Calu3 (cell line): ENCODE measurements at regions of chr10 and their contacts with region 1.

Region 1: DNA sequence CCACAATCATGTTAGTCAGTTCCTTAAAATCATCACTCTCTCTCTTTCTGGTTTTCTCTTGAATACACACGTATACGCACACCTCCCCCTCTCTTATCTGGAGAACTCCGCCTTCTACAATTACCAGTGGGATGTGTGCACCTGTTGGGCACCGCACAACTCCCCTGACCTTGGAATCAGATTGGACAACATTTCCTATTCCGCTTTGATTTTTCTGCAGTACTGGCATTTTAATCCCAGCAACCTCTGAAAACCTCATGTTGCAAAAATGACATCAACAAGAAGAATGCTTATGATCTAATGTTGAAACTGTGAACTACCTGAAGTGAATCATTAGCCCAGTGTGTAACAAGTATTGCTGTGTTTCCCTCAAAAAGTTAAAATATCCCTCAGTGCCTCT is 109.6 kb downstream of the KIAA1217 start:
- DNase-seq: peak; percentile 11
- H3K4me3 Mint-ChIP-seq: peak overlapping the region; percentile 25
- H3K27ac Mint-ChIP-seq: peak overlapping the region; percentile 68
- H3K4me1 Mint-ChIP-seq: peaks cover 25% of the 10 kb centered on the region
- H3K27me3 Mint-ChIP-seq: no peaks in the 10 kb centered on the region
- CTCF ChIP-seq: no peak

Region 2: GRCh38 chr10:24238519-24239252 is 79.8 kb before region 1 on chr10:
- CTCF ChIA-PET with region 1: interaction called, 4 read pairs
- intact Hi-C with region 1: loop called (anchors 5 kb)
- DNase-seq: peak; percentile 74
- H3K4me3 Mint-ChIP-seq: peak overlapping the region; percentile 74
- H3K27ac Mint-ChIP-seq: peak overlapping the region; percentile 92
- H3K4me1 Mint-ChIP-seq: peaks cover 24% of the 10 kb centered on the region
- H3K27me3 Mint-ChIP-seq: no peaks in the 10 kb centered on the region
- CTCF ChIP-seq: no peak

Region 3: DNA sequence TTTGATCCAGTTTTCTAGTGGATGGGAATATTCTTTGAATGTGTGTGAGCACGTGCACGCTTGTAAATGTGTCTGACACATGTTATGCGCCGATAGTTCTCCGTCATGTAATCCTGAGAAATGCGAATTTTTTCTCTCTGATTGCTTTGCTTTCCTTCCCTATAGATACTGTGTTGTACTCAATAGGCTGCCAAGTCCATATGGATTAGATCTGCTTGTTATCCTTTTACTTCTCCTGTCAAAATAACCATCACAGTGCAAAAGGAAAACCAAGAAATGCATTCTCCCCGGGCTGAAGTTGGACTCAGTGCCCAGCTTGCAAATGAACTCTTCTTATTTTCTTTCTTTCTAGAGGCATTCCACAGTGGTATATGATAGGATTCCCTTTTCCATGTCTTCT is 22.4 kb after region 1 on chr10:
- CTCF ChIA-PET with region 1: no interaction called
- intact Hi-C with region 1: no loop called
- DNase-seq: no peak
- H3K4me3 Mint-ChIP-seq: no peak overlapping the region
- H3K27ac Mint-ChIP-seq: no peak overlapping the region
- H3K4me1 Mint-ChIP-seq: peaks cover 20% of the 10 kb centered on the region
- H3K27me3 Mint-ChIP-seq: no peaks in the 10 kb centered on the region
- CTCF ChIP-seq: no peak

Region 4: DNA sequence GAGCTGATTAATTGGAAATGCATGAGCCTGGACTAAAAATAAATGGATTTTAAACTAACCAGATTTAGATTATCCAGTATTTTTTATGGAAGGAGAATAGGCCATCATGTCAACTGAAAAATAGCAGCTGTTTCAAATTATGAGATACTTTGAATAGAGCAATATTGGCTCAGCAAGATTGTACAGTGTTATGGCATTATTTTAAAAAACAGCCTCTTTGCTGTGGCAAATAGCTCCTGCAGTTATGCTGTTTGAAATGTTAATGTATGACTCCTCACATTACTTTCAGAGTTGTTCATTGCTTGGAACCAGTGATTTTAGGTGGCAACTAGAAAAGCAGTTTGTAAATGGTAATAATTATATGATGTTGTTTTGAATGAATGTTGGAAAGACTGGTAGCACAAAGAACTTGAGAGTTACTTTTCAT is 134.9 kb after region 1 on chr10:
- CTCF ChIA-PET with region 1: interaction called, 10 read pairs
- intact Hi-C with region 1: no loop called
- DNase-seq: no peak
- H3K4me3 Mint-ChIP-seq: no peak overlapping the region
- H3K27ac Mint-ChIP-seq: no peak overlapping the region
- H3K4me1 Mint-ChIP-seq: peaks cover 18% of the 10 kb centered on the region
- H3K27me3 Mint-ChIP-seq: no peaks in the 10 kb centered on the region
- CTCF ChIP-seq: no peak